ENCODE measurements at regions of chr4 and their contacts with region 1.

Region 1: GRCh38 chr4:111641955-111642579 is 503.2 kb upstream of the FAM241A start:
- DNase-seq: peak; percentile 11
- H3K4me3 Mint-ChIP-seq: no peak overlapping the region
- H3K27ac Mint-ChIP-seq: no peak overlapping the region
- H3K4me1 Mint-ChIP-seq: no peaks in the 10 kb centered on the region
- H3K27me3 Mint-ChIP-seq: peaks cover 2% of the 10 kb centered on the region

Region 2: DNA sequence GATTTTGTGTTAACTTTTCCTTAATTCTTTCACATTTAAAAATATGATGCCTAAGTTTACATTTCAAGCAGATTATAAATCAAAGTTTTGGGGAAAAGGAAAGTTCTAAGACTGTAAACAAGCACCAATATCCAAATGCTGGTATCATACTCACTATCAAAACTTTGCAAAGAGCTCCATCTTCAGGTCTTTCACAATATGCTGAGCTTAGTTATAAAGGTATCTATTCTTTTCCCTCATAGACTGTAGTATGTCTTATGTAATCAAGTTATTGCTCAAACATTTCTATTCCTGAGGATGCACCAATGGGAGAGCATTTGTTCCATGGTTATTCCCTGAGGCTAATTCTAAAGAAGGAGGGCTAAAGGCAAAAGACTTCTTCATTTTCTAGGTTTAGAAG is 295.3 kb after region 1 on chr4:
- intact Hi-C with region 1: loop called (anchors 5 kb)
- DNase-seq: no peak
- H3K4me3 Mint-ChIP-seq: no peak overlapping the region
- H3K27ac Mint-ChIP-seq: no peak overlapping the region
- H3K4me1 Mint-ChIP-seq: no peaks in the 10 kb centered on the region
- H3K27me3 Mint-ChIP-seq: peaks cover 5% of the 10 kb centered on the region

Region 3: DNA sequence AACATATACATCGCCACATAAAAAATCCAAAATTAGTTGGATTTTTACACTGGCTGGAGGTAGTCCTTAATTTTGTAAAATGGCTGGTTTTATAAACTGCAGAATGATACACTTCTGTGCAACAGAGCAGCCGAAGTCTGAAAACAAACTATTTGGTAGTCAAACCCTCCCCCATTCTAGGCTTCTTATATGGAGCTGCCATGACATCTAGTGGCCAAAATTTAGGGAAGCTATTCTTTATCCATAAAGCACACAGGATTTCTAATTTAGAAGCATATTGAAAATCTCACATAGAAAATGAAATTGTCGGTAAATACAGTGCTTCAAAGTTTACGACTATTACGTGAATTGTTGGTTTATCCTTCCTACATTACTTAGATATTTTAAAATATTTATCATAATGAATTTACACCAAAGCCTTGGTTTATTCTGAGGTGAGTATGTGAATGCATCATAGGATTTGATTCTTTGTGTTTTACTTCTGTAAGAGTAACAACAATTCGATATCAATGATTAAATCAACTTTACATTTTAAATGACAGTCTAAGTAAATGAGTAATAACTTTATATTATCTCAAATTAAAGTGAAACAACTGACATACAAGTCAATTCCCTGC is 389.8 kb after region 1 on chr4:
- intact Hi-C with region 1: loop called (anchors 1 kb)
- DNase-seq: no peak
- H3K4me3 Mint-ChIP-seq: no peak overlapping the region
- H3K27ac Mint-ChIP-seq: no peak overlapping the region
- H3K4me1 Mint-ChIP-seq: no peaks in the 10 kb centered on the region
- H3K27me3 Mint-ChIP-seq: peaks cover 24% of the 10 kb centered on the region